ENCODE measurements at regions of chr2 and their contacts with region 1.

Region 1: DNA sequence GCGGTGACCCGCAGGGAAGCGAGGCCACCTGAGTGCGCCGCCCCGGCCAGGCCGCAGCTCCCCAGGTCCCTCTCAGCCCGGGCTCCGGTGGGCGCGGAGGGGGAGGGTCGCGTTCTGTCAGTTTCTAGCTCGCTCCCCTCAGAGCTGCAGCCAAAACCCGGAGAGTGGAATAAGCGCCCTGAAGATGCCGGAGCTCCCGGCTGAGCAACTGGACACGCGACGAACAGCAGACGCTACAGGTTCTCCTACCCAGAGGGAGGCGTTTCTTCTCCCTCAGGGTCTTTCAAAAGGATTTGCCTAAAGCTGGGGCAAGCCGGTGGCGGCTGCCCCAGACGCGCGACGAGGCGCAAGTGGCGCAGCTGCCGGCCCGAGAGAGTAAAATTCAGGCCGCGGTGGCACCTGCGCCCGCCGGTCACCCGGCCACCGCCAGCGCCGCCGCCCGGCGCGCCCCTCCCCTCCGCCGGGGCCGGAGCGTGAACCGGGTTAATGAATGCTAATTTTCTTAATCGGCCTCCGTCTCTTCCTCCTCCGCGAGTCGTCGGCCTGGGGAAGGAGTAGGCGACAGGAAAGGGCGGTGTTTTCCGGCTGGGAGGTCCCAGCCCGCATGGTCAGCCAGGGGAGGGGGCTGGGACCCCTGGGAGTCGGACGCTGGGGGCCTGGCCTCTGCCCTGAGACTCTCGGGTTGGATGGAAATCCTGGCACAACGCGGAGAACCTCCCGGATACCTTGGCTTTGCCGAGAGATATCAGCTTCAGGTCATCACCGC is 845 bp upstream of the CDC42EP3 start:
- DNase-seq: peak; percentile 73 to 92
- ATAC-seq: peak; percentile 75 to 82
- H3K4me3 ChIP-seq: peak overlapping the region; percentile 81 to 99 (median 95)
- H3K27ac ChIP-seq: peak overlapping the region; percentile 98 to 100 (median 100)
- H3K4me1 ChIP-seq: peaks cover 29 to 42% of the 10 kb centered on the region in 2 donors
- H3K27me3 ChIP-seq: no peaks in the 10 kb centered on the region
- CTCF ChIP-seq: peak in 4 of 5 experiments; percentile 6 to 26 (median 16)
- POLR2A ChIP-seq: peak; percentile 79 to 80

Region 2: DNA sequence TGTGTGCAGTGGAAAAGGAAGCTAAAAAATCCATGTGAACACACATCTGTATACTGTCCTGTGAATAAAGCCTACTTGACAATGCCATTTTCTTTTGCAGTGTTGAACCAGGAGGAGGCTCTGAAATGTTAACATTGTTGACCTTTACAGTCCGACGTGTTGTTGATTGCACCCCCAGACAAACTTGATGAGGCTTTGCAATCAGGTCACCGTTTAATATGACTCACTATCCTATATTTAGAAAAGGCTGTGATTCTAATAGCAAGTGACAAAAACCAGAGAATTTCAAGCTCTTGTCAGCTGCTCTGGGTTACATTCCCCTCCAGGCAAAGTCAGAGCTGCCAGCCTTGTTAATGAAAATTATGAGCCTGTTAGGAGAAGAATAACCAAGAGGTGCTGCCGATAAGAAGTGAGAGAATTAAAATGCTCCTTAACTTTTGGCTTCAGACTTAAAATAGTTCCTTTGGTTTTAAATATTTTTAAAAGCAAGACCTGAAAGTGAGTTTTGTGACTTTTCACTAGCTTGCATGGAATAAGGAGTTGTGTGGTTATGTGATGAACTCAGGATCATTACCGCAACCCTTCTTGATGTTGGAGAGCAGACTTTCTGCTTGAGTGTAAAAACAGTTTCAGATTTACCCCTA is 165.8 kb before region 1 on chr2:
- in situ Hi-C with region 1: no loop called
- intact Hi-C with region 1: loop called (anchors 10 kb)
- DNase-seq: peak in 1 of 2 donors; percentile 19
- ATAC-seq: peak; percentile 86 to 87
- H3K4me3 ChIP-seq: no peak overlapping the region
- H3K27ac ChIP-seq: peak overlapping the region; percentile 49 to 79 (median 69)
- H3K4me1 ChIP-seq: peaks cover 31 to 39% of the 10 kb centered on the region in 2 donors
- H3K27me3 ChIP-seq: no peaks in the 10 kb centered on the region
- CTCF ChIP-seq: no peak
- POLR2A ChIP-seq: no peak

Region 3: DNA sequence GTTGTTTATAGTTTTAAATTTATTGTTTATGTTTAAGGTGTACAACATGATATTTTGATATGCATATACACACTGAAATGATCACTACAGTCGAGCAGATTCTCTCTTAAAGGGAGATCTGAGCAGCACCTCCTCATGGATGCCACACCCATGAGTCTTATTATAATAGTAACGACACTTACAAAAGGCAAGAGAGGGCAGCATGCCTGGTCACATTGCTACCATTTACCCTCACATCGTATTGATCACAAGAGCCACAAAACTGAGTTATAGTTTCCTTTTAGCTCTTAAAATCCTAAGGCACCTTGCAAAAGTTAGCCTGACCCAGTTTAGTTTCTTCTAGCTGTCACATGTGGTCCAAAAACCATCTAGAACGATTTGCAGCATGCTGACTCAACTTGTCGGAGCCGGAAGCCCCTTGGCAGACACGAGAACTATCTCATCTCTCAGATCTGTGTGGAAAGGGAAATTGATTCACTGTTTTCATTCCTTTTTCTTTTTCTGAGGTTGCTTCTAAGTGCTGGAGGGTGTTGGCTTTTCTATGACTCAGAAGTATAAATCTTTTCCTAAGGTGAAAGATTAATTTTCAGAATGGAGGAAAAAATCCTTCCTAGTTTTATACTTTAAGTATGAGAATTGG is 86.2 kb before region 1 on chr2:
- in situ Hi-C with region 1: no loop called
- intact Hi-C with region 1: loop called (anchors 1 kb)
- DNase-seq: peak; percentile 25 to 62
- ATAC-seq: no peak
- H3K4me3 ChIP-seq: no peak overlapping the region
- H3K27ac ChIP-seq: peak overlapping the region; percentile 76 to 87 (median 85)
- H3K4me1 ChIP-seq: peaks cover 64 to 65% of the 10 kb centered on the region in 2 donors
- H3K27me3 ChIP-seq: no peaks in the 10 kb centered on the region
- CTCF ChIP-seq: no peak
- POLR2A ChIP-seq: no peak

Region 4: DNA sequence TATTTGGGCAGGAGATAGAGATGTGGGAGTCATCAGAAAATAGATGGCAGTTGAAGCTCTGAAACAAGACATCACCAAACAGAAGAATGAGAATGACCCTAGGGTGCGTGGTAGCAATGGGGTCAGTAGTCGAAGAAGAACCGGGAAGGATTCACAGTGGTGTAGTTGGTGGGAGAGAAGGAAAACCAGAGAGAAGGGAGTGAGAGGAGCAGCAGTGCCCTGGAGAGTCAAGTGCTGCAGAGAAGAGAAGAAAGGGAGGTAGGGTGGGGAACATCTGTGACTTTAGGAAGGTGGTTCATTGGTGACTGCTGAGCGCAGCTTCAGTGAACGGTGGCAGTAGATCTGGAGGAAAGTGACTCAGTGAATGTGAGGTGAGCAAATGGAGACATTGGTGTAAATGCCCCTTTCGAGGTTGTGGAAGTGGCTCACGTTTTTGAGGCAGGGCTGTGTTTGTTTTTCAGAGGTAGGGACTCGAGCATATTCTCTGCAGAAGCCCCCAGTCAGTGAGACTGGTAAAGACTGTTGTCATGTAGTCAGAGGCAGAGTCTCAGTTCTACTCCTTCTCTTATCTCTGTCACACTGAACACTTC is 37.3 kb before region 1 on chr2:
- in situ Hi-C with region 1: no loop called
- intact Hi-C with region 1: loop called (anchors 2 kb)
- DNase-seq: no peak
- ATAC-seq: no peak
- H3K4me3 ChIP-seq: no peak overlapping the region
- H3K27ac ChIP-seq: no peak overlapping the region
- H3K4me1 ChIP-seq: peaks cover 10 to 19% of the 10 kb centered on the region in 2 donors
- H3K27me3 ChIP-seq: no peaks in the 10 kb centered on the region
- CTCF ChIP-seq: no peak
- POLR2A ChIP-seq: no peak

Region 5: GRCh38 chr2:37653805-37654378 is 18.4 kb before region 1 on chr2:
- in situ Hi-C with region 1: no loop called
- intact Hi-C with region 1: loop called (anchors 1 kb)
- DNase-seq: peak; percentile 80 to 95
- ATAC-seq: peak; percentile 83 to 85
- H3K4me3 ChIP-seq: peak overlapping the region; percentile 16 to 46 (median 27)
- H3K27ac ChIP-seq: peak overlapping the region; percentile 85 to 88 (median 87)
- H3K4me1 ChIP-seq: peaks cover 93 to 94% of the 10 kb centered on the region in 2 donors
- H3K27me3 ChIP-seq: no peaks in the 10 kb centered on the region
- CTCF ChIP-seq: no peak
- POLR2A ChIP-seq: peak; percentile 4 to 46

Region 6: DNA sequence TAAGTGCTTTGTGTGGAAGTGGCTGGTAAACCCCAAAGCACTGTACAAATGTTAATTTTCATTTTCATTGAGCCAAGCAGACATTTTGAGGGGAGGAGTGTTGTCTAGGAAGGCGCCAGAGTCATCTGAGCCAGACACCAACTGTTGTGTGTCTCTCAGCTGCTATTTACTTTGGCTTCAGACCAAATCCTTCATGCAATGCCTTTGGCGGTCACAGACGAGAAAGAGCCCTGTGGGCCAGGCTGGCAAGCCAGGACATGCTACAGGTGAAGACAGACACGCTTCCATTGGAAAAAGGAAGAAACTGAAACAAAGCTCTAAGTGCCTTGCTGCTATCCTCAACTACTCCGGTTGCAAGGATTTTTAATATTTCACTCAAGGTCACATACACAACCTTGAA is 114.6 kb after region 1 on chr2:
- in situ Hi-C with region 1: no loop called
- intact Hi-C with region 1: loop called (anchors 5 kb)
- DNase-seq: peak; percentile 45 to 77
- ATAC-seq: peak; percentile 91 to 99
- H3K4me3 ChIP-seq: no peak overlapping the region
- H3K27ac ChIP-seq: peak overlapping the region; percentile 32 to 60 (median 42)
- H3K4me1 ChIP-seq: peaks cover 25 to 26% of the 10 kb centered on the region in 2 donors
- H3K27me3 ChIP-seq: no peaks in the 10 kb centered on the region
- CTCF ChIP-seq: no peak
- POLR2A ChIP-seq: no peak

Measured in gastrocnemius medialis (tissue), 4 donors.